ENCODE measurements at regions of chr11 and their contacts with region 1.

Region 1: GRCh38 chr11:74444173-74444826 is 23.0 kb downstream of the KCNE3 start:
- DNase-seq: no peak
- H3K4me3 Mint-ChIP-seq: no peak overlapping the region
- H3K27ac Mint-ChIP-seq: no peak overlapping the region
- H3K4me1 Mint-ChIP-seq: no peaks in the 10 kb centered on the region
- H3K27me3 Mint-ChIP-seq: peaks cover 8% of the 10 kb centered on the region

Region 2: GRCh38 chr11:74123008-74123448 is 321.3 kb before region 1 on chr11:
- CTCF ChIA-PET with region 1: no interaction called
- DNase-seq: no peak
- H3K4me3 Mint-ChIP-seq: no peak overlapping the region
- H3K27ac Mint-ChIP-seq: no peak overlapping the region
- H3K4me1 Mint-ChIP-seq: no peaks in the 10 kb centered on the region
- H3K27me3 Mint-ChIP-seq: no peaks in the 10 kb centered on the region

Region 3: DNA sequence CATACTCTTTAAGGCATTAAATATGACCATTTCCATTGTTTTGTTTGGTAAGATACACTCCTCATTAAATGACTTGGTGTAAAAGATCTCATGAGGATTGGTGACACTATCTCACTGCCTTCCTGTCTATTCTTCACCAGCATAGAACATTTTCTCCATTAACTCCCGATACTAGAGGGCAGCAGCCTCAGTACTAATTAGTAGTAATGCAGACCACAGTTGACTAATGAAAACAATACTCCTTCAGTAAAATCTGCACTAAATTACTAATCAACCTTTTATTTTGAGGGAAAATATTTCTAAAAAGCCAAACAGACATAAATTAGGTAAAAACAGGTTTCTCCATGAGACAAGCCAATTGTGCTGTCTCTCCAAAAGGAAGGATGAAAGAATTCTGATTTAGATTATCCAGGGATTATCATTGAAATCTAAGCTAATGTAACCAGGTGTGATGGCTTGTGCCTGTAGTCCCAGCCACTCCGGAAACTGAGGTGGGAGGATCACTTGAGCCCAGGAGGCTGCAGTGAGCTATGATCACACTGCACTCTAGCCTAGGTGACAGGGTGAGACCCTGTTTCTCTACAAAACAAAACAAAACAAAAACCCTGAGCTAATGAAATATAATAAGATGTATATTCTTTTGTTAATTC is 55.5 kb before region 1 on chr11:
- CTCF ChIA-PET with region 1: interaction called, 54 read pairs
- DNase-seq: peak; percentile 75
- H3K4me3 Mint-ChIP-seq: no peak overlapping the region
- H3K27ac Mint-ChIP-seq: no peak overlapping the region
- H3K4me1 Mint-ChIP-seq: peaks cover 16% of the 10 kb centered on the region
- H3K27me3 Mint-ChIP-seq: no peaks in the 10 kb centered on the region

Region 4: GRCh38 chr11:74478877-74479731 is 34.8 kb after region 1 on chr11:
- CTCF ChIA-PET with region 1: no interaction called
- DNase-seq: no peak
- H3K4me3 Mint-ChIP-seq: no peak overlapping the region
- H3K27ac Mint-ChIP-seq: no peak overlapping the region
- H3K4me1 Mint-ChIP-seq: no peaks in the 10 kb centered on the region
- H3K27me3 Mint-ChIP-seq: no peaks in the 10 kb centered on the region

Measured in activated naive CD4-positive, alpha-beta T cell treated with anti-CD3 and anti-CD28 coated beads, Interleukin-2, amount 10 ng/mL, durations not matched to agents 7 days and 5 days (primary cell).